Activated CD4-positive, alpha-beta memory T cell treated with anti-CD3 and anti-CD28 coated beads for 36 hours (primary cell): ENCODE measurements at regions of chr3 and their contacts with region 1.

Region 1: GRCh38 chr3:57555738-57556458 is at the start of gene PDE12:
- DNase-seq: peak; percentile 89
- H3K4me3 Mint-ChIP-seq: peak within 1 kb of the TSS; percentile 97
- H3K27ac Mint-ChIP-seq: peak within 1 kb of the TSS; percentile 96
- H3K4me1 Mint-ChIP-seq: peaks cover 34% of the 10 kb centered on the region
- H3K27me3 Mint-ChIP-seq: no peaks in the 10 kb centered on the region
- total RNA-seq, gene PDE12: 20.7 to 21.9 TPM

Region 2: GRCh38 chr3:57169872-57170623 is 385.9 kb before region 1 on chr3:
- CTCF ChIA-PET with region 1: interaction called, 3 read pairs
- POLR2A ChIA-PET with region 1: no interaction called
- intact Hi-C with region 1: loop called (anchors 5 kb)
- DNase-seq: peak; percentile 75
- H3K4me3 Mint-ChIP-seq: peak overlapping the region; percentile 57
- H3K27ac Mint-ChIP-seq: no peak overlapping the region
- H3K4me1 Mint-ChIP-seq: peaks cover 4% of the 10 kb centered on the region
- H3K27me3 Mint-ChIP-seq: peaks cover 47% of the 10 kb centered on the region

Region 3: GRCh38 chr3:57244946-57245345 is 311.0 kb before region 1 on chr3:
- CTCF ChIA-PET with region 1: no interaction called
- POLR2A ChIA-PET with region 1: no interaction called
- intact Hi-C with region 1: no loop called
- DNase-seq: no peak
- H3K4me3 Mint-ChIP-seq: no peak overlapping the region
- H3K27ac Mint-ChIP-seq: no peak overlapping the region
- H3K4me1 Mint-ChIP-seq: no peaks in the 10 kb centered on the region
- H3K27me3 Mint-ChIP-seq: no peaks in the 10 kb centered on the region

Region 4: GRCh38 chr3:57436195-57436761 is 119.6 kb before region 1 on chr3:
- CTCF ChIA-PET with region 1: no interaction called
- POLR2A ChIA-PET with region 1: no interaction called
- intact Hi-C with region 1: no loop called
- DNase-seq: no peak
- H3K4me3 Mint-ChIP-seq: no peak overlapping the region
- H3K27ac Mint-ChIP-seq: no peak overlapping the region
- H3K4me1 Mint-ChIP-seq: no peaks in the 10 kb centered on the region
- H3K27me3 Mint-ChIP-seq: peaks cover 10% of the 10 kb centered on the region

Region 5: GRCh38 chr3:57597122-57597923 is 41.4 kb after region 1 on chr3 and contains the start of gene ARF4:
- CTCF ChIA-PET with region 1: interaction called, 5 read pairs
- POLR2A ChIA-PET with region 1: interaction called, 44 read pairs
- intact Hi-C with region 1: loop called (anchors 1 kb)
- DNase-seq: peak; percentile 100
- H3K4me3 Mint-ChIP-seq: peak within 1 kb of the TSS; percentile 97
- H3K27ac Mint-ChIP-seq: peak within 1 kb of the TSS; percentile 99
- H3K4me1 Mint-ChIP-seq: peaks cover 41% of the 10 kb centered on the region
- H3K27me3 Mint-ChIP-seq: no peaks in the 10 kb centered on the region
- total RNA-seq, gene ARF4: 66.6 to 68.8 TPM

Region 6: DNA sequence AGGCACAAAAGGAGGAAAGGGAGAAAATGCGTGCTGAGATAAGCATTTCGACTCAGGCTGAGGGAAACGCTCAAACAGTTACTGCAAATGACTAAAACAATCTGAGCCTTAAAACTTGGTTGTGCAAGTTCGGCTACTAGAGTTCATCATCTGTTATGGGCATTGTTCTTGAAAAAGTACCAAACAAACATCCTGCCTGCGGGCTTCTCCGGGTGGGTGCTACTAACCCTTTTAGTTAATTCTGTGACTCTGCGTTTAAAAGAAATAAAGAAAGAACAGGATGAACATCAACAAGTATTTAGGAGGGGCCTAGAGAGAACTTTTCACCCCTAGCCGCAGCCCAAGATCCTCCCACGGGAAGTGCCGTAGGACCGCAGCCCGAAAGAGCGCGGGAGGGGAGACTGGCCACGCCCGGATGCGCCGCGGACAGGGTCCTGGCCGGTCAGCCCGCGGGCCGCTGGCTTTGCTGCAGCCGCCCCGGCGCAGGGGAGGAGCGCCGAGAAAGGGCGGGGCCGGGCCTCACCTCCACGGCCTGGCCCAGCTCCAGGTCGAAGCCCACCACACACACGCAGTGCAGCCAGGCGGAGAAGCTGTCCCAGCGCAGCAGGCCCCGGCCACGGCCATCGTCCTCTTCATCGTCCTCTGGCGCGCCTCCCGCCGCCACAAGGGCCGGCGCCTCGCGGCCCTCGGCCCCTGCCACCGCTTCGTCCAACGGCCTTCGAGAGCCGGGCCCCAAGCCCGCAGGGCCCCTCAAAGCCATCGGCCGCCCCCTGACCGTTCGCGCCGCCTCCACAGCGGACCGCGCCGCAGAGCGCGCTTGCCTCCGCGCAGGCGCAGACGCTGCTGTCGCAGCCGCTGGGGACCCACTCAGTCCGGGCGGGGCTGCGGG is 136.6 kb after region 1 on chr3 and contains the start of gene DENND6A:
- CTCF ChIA-PET with region 1: interaction called, 4 read pairs
- POLR2A ChIA-PET with region 1: interaction called, 17 read pairs
- intact Hi-C with region 1: loop called (anchors 2 kb)
- DNase-seq: peak; percentile 97
- H3K4me3 Mint-ChIP-seq: peak within 1 kb of the TSS; percentile 81
- H3K27ac Mint-ChIP-seq: peak within 1 kb of the TSS; percentile 92
- H3K4me1 Mint-ChIP-seq: peaks cover 36% of the 10 kb centered on the region
- H3K27me3 Mint-ChIP-seq: no peaks in the 10 kb centered on the region
- total RNA-seq, gene DENND6A: 13.0 to 16.0 TPM